Activated CD8-positive, alpha-beta T cell treated with anti-CD3 and anti-CD28 coated beads for 36 hours (primary cell): ENCODE measurements at regions of chr2 and their contacts with region 1.

Region 1: GRCh38 chr2:135797497-135798274 is 39.3 kb downstream of the LCT start:
- DNase-seq: peak; percentile 90
- ATAC-seq: peak; percentile 80
- H3K4me3 Mint-ChIP-seq: no peak overlapping the region
- H3K27ac Mint-ChIP-seq: peak overlapping the region; percentile 9
- H3K4me1 Mint-ChIP-seq: peaks cover 24% of the 10 kb centered on the region
- H3K27me3 Mint-ChIP-seq: no peaks in the 10 kb centered on the region
- CTCF ChIP-seq: peak; percentile 92

Region 2: DNA sequence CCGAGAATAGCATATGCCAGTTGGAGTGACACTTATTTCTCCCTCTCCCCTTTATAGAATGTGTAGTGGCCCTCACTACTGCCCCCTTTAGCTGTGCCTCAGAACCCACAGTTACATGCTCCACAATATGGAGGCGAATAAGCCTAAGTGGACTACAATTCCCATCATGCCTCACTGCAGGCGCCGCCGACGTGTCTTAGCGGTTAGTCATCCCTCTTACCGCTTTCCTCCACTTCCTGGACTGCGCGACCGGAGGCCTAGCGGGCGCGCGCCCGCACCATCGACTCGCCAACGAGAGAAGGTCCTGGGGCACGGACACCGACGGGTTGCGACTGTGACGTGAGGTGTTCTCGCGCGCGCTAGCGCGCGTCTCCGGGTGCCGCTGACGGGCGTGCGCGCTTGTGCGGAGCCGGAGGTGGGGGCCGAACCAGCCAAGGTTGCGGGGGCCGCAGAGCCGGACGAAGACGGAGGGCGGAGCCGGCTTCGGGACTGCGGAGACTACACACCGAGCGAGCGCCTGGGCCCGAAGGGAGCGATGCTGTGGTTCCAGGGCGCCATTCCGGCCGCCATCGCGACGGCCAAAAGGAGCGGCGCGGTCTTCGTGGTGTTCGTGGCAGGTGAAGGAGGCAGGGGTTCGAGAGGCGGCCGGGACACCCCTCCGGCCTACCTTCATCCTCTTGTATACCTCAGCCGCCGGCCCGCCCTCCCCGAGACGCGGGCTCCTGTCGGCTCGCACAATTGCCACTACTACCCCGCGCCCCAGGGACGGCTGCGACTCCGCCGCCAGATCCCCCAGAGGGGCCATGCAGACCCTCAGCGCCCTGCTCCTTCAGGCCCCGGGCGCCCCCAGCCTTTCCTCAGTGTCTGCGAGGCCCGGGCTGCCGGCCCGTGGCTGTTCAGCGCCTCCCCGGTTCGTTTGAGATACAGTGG is 56.0 kb before region 1 on chr2 and contains the start of gene UBXN4:
- CTCF ChIA-PET with region 1: interaction called, 35 read pairs
- POLR2A ChIA-PET with region 1: no interaction called
- intact Hi-C with region 1: no loop called
- DNase-seq: peak; percentile 98
- ATAC-seq: peak; percentile 92
- H3K4me3 Mint-ChIP-seq: peak within 1 kb of the TSS; percentile 97
- H3K27ac Mint-ChIP-seq: peak within 1 kb of the TSS; percentile 99
- H3K4me1 Mint-ChIP-seq: peaks cover 33% of the 10 kb centered on the region
- H3K27me3 Mint-ChIP-seq: no peaks in the 10 kb centered on the region
- CTCF ChIP-seq: peak; percentile 65
- total RNA-seq, gene UBXN4: 90.5 to 105 TPM

Region 3: DNA sequence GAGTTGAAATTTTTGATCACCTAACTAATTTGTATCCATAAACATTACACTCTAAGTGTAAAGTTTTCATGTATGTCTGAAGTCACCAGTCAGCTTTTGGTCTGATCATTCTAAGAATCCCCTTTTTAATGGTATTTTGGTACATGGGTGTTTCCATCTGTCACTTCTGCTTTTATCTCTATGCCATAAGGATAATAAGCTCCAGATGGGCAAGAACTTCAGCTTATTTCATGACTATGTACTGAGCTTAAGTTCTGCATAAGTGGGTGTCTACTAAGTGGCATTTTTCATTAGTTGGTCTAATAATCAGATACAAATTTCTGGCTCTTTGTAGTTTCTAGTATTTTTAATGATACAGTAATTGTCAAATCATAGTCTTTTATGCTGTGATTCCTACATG is 35.7 kb before region 1 on chr2:
- CTCF ChIA-PET with region 1: interaction called, 20 read pairs
- POLR2A ChIA-PET with region 1: no interaction called
- intact Hi-C with region 1: no loop called
- DNase-seq: no peak
- ATAC-seq: no peak
- H3K4me3 Mint-ChIP-seq: no peak overlapping the region
- H3K27ac Mint-ChIP-seq: no peak overlapping the region
- H3K4me1 Mint-ChIP-seq: peaks cover 18% of the 10 kb centered on the region
- H3K27me3 Mint-ChIP-seq: no peaks in the 10 kb centered on the region
- CTCF ChIP-seq: no peak

Region 4: GRCh38 chr2:135785032-135785431 is 12.7 kb before region 1 on chr2:
- CTCF ChIA-PET with region 1: interaction called, 86 read pairs
- POLR2A ChIA-PET with region 1: interaction called, 4 read pairs
- intact Hi-C with region 1: no loop called
- DNase-seq: no peak
- ATAC-seq: no peak
- H3K4me3 Mint-ChIP-seq: no peak overlapping the region
- H3K27ac Mint-ChIP-seq: no peak overlapping the region
- H3K4me1 Mint-ChIP-seq: no peaks in the 10 kb centered on the region
- H3K27me3 Mint-ChIP-seq: no peaks in the 10 kb centered on the region
- CTCF ChIP-seq: peak; percentile 41

Region 5: DNA sequence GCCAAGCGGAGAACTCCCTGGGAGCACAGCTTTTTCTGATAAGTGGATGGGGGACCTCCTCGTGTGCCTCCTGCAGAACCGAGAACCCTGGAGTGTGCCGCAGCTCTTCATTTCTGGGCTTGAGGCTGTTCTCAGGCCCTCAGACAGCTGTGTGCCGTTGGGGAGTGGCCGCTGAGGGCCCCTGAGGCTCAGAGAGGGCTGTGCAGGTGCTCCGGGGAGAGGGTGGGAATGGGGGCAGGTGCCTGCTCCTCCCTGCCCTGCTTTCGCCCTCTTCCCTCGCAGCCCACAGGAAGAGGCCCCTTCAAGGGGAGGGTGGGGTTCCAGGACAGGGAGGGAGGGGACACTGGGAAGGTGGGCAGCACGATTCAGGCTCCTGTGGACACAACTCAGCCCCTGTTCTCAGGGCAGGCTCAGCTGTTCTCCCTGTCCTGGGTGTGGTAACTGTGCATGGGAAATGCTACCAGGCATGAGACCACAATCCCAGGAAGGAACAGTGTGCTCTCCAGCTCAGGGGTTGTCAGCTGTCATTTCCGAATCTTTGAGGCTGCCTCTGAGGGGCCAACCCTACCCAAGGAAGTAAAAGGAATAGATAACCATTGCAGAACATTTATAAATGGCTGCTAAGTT is 28.0 kb after region 1 on chr2:
- CTCF ChIA-PET with region 1: interaction called, 145 read pairs
- POLR2A ChIA-PET with region 1: no interaction called
- intact Hi-C with region 1: no loop called
- DNase-seq: no peak
- ATAC-seq: peak; percentile 29
- H3K4me3 Mint-ChIP-seq: no peak overlapping the region
- H3K27ac Mint-ChIP-seq: no peak overlapping the region
- H3K4me1 Mint-ChIP-seq: peaks cover 26% of the 10 kb centered on the region
- H3K27me3 Mint-ChIP-seq: no peaks in the 10 kb centered on the region
- CTCF ChIP-seq: no peak

Region 6: DNA sequence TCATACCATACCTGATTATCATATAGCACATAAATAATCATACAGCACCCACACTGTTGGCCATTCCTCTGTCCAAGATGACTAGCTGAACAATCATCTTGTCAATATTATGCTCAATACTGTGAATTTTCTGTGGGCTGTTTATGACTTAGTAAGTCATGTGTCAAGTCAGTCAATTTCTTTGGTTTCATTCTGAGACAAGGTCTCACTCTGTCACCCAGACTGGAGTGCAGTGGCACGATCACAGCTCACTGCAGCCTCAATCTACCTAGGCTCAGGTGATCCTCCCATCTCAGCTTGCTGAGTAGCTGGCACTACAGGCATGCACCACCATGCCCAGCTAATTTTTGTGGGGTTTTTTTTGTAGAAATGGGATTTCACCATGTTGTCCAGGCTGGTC is 72.9 kb after region 1 on chr2:
- CTCF ChIA-PET with region 1: interaction called, 20 read pairs
- POLR2A ChIA-PET with region 1: interaction called, 4 read pairs
- intact Hi-C with region 1: no loop called
- DNase-seq: no peak
- ATAC-seq: peak; percentile 52
- H3K4me3 Mint-ChIP-seq: no peak overlapping the region
- H3K27ac Mint-ChIP-seq: peak overlapping the region; percentile 55
- H3K4me1 Mint-ChIP-seq: peaks cover 52% of the 10 kb centered on the region
- H3K27me3 Mint-ChIP-seq: no peaks in the 10 kb centered on the region
- CTCF ChIP-seq: no peak